AG04450 (cell line): ENCODE measurements at regions of chr11 and their contacts with region 1.

Region 1: GRCh38 chr11:130916238-130916855 is at the start of gene SNX19:
- DNase-seq: peak; percentile 63
- H3K4me3 ChIP-seq: peak within 1 kb of the TSS; percentile 80
- H3K27ac ChIP-seq: peak within 1 kb of the TSS; percentile 77
- H3K27me3 ChIP-seq: no peaks in the 10 kb centered on the region
- CTCF ChIP-seq: peak; percentile 80
- polyA plus RNA-seq, gene SNX19: 64.9 and 78.8 TPM in 2 replicates

Region 2: GRCh38 chr11:130798280-130798679 is 118.1 kb before region 1 on chr11:
- CTCF ChIA-PET with region 1: no interaction called
- POLR2A ChIA-PET with region 1: no interaction called
- DNase-seq: peak; percentile 69
- H3K4me3 ChIP-seq: no peak overlapping the region
- H3K27ac ChIP-seq: peak overlapping the region; percentile 47
- H3K27me3 ChIP-seq: no peaks in the 10 kb centered on the region
- CTCF ChIP-seq: no peak

Region 3: DNA sequence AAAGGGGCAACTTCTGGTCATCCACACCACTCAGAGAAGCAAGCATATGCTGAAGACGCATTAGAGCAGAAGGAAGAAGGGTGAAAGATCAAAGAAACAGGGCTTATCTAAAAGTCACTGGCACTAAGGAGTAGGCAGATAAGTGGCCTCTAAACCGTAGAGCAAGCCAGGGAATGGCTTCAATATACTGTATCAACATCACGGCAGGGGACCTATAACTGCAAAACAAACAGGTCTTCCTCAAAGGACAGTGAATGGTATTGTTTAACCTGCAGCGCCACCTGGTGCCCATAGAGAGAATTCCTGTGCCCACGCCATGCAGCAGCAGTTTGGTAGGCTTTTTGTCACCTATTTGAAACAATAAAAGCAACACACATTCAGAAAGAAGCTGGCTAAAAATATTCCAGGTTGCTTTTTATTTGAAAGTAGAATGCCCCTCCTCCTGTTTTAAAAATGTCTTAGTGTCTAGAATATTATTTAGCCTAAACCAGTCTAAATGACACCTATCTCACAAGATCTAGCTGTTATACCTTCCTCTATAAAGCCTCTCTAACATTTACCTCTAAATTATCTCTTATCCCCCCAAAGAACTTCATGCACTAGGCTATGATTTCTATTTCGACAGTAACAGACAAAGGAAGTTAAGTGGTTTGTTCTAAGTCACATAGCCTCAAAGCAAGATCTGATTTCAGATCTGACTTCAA is 21.9 kb before region 1 on chr11:
- CTCF ChIA-PET with region 1: interaction called, 27 read pairs
- POLR2A ChIA-PET with region 1: interaction called, 15 read pairs
- DNase-seq: peak; percentile 55
- H3K4me3 ChIP-seq: no peak overlapping the region
- H3K27ac ChIP-seq: no peak overlapping the region
- H3K27me3 ChIP-seq: no peaks in the 10 kb centered on the region
- CTCF ChIP-seq: peak; percentile 91

Region 4: DNA sequence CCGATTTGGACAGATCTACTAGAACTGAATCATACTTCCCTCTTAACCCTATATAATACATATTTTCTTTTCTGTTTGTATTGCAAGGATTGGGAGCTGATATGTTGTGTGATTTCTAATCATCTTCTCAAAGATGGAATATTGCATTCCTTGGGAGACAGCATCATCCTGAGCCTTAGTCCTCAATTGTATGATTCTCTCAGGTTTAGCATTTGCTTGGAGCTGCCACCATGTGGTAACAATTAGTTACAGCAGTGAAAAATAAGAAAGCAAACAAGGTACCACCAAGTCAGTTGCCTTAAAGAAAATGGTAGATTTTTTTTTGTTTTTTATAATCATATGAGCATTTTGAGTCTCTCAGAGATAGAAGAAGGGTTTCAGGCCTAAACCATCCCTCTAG is 12.0 kb before region 1 on chr11:
- CTCF ChIA-PET with region 1: interaction called, 42 read pairs
- POLR2A ChIA-PET with region 1: interaction called, 3 read pairs
- DNase-seq: no peak
- H3K4me3 ChIP-seq: no peak overlapping the region
- H3K27ac ChIP-seq: no peak overlapping the region
- H3K27me3 ChIP-seq: no peaks in the 10 kb centered on the region
- CTCF ChIP-seq: no peak; the same call in 1 of the 2 replicates

Region 5: DNA sequence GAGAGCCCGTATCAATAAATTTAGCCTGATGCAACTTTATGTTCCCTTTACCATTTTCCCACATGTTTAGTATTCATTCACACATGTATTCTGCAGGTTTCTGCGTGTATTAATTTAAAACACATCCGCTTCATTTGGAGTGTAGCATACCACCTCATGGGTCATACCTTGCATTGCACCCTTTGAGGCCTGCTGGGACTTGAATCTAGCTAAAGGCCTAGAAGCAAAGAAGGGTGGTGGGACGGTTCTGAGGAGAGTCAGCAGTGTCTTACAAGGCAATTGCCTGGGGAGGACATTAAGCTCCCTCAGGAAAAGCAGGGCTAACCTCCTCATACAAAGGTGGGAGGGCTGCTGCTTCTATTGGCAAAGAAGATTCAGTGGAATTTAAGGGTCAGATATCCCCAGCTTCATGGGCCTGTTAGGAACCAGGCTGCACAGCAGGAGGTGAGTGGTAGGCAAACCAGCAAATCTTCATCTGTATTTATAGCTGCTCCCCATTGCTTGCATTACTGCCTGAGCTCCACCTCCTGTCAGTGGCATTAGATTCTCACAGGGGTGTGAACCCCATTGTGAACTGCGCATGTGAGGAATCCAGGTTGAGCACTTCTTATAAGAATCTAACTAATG is 15.9 kb after region 1 on chr11:
- CTCF ChIA-PET with region 1: interaction called, 22 read pairs
- POLR2A ChIA-PET with region 1: no interaction called
- DNase-seq: no peak
- H3K4me3 ChIP-seq: no peak overlapping the region
- H3K27ac ChIP-seq: no peak overlapping the region
- H3K27me3 ChIP-seq: no peaks in the 10 kb centered on the region
- CTCF ChIP-seq: no peak

Region 6: GRCh38 chr11:130940706-130941105 is 24.4 kb after region 1 on chr11:
- CTCF ChIA-PET with region 1: interaction called, 11 read pairs
- POLR2A ChIA-PET with region 1: no interaction called
- DNase-seq: no peak
- H3K4me3 ChIP-seq: no peak overlapping the region
- H3K27ac ChIP-seq: no peak overlapping the region
- H3K27me3 ChIP-seq: no peaks in the 10 kb centered on the region
- CTCF ChIP-seq: no peak

Region 7: GRCh38 chr11:130979386-130979972 is 63.1 kb after region 1 on chr11:
- CTCF ChIA-PET with region 1: interaction called, 19 read pairs
- POLR2A ChIA-PET with region 1: no interaction called
- DNase-seq: peak; percentile 30
- H3K4me3 ChIP-seq: no peak overlapping the region
- H3K27ac ChIP-seq: no peak overlapping the region
- H3K27me3 ChIP-seq: peaks cover 8% of the 10 kb centered on the region
- CTCF ChIP-seq: peak; percentile 77

Region 8: GRCh38 chr11:131033151-131033685 is 116.9 kb after region 1 on chr11:
- CTCF ChIA-PET with region 1: interaction called, 10 read pairs
- POLR2A ChIA-PET with region 1: interaction called, 4 read pairs
- DNase-seq: peak; percentile 88
- H3K4me3 ChIP-seq: no peak overlapping the region
- H3K27ac ChIP-seq: peak overlapping the region; percentile 82
- H3K27me3 ChIP-seq: no peaks in the 10 kb centered on the region
- CTCF ChIP-seq: no peak

Region 9: GRCh38 chr11:131146827-131147490 is 230.6 kb after region 1 on chr11:
- CTCF ChIA-PET with region 1: no interaction called
- POLR2A ChIA-PET with region 1: no interaction called
- DNase-seq: no peak
- H3K4me3 ChIP-seq: no peak overlapping the region
- H3K27ac ChIP-seq: no peak overlapping the region
- H3K27me3 ChIP-seq: no peaks in the 10 kb centered on the region
- CTCF ChIP-seq: no peak

Region 10: DNA sequence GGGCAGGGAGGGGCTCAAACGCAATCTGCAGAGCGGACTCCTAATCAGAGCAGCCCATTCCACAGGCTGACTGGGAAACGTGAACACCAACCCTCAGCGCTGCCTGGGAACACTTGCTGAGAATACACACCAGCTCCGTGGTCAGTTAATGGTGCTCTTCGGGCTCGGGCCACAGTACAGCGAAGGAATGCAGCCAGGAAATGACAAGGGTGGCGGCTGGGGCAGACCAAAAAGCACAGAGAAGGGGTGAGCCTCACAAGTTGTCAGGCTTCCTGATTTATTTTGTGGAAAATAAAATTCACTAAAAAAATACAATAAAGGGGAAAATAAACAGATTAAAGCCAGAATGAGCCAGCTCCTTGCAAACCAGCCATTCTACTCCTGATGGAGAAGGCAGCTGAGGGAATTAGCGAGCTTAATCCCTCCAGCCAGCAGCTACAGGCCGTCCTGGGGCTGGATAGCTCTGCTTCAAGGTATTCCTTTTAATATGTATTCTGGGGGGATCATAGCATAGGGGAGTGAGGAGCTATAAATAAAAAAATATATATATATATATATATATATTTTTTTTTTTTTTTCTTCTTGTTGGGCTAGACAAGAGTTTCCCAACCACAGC is 288.5 kb after region 1 on chr11:
- CTCF ChIA-PET with region 1: no interaction called
- POLR2A ChIA-PET with region 1: no interaction called
- DNase-seq: no peak
- H3K4me3 ChIP-seq: no peak overlapping the region
- H3K27ac ChIP-seq: no peak overlapping the region
- H3K27me3 ChIP-seq: peaks cover 11% of the 10 kb centered on the region
- CTCF ChIP-seq: no peak